ENCODE measurements at regions of chr2 and their contacts with region 1.

Region 1: GRCh38 chr2:170409164-170409535 is 231.2 kb downstream of the MYO3B start:
- DNase-seq: peak; percentile 86
- H3K4me3 Mint-ChIP-seq: no peak overlapping the region
- H3K27ac Mint-ChIP-seq: no peak overlapping the region
- H3K4me1 Mint-ChIP-seq: peaks cover 7% of the 10 kb centered on the region
- H3K27me3 Mint-ChIP-seq: peaks cover 16% of the 10 kb centered on the region

Region 2: GRCh38 chr2:170815746-170816503 is 406.8 kb after region 1 on chr2:
- CTCF ChIA-PET with region 1: interaction called, 10 read pairs
- POLR2A ChIA-PET with region 1: no interaction called
- DNase-seq: peak; percentile 71
- H3K4me3 Mint-ChIP-seq: peak overlapping the region; percentile 73
- H3K27ac Mint-ChIP-seq: peak overlapping the region; percentile 20
- H3K4me1 Mint-ChIP-seq: peaks cover 56% of the 10 kb centered on the region
- H3K27me3 Mint-ChIP-seq: peaks cover 78% of the 10 kb centered on the region

Measured in activated CD4-positive, alpha-beta T cell treated with anti-CD3 and anti-CD28 coated beads, Interleukin-2, amount 10 ng/mL, durations not matched to agents 7 days and 5 days (primary cell).